ENCODE measurements at regions of chr7 and their contacts with region 1.

Region 1: DNA sequence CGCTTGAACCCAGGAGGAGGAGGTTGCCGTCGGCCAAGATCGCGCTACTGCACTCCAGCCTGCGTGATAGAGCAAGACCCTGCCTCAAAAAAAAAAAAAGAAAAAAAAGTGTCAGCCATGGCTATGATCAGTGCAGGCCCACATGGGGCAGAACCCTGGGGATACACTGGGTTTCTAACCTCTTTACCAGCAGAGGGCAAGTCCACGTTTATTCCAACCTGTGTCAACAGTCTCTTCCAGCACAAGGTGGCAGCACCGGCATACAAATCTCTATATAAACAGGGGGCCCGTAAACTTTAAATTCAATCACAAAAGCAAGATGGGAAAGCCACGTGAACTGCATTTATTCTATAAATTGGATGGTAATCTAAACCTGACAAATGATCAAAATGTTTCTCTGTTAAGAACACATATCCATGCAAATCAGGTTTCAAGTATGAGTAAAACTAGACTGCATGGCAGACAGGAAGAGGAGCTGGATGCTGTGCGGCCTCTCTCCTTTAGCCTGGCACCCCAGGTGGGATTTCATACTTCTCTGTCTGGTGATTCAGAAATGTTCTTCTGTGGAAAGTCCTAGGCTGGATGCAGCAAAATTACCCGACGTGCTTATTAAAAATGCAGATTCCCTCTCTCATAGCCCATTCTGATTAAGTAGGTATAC is 60.0 kb upstream of the STEAP1B start:
- DNase-seq: peak; percentile 79
- ATAC-seq: peak; percentile 73

Region 2: GRCh38 chr7:22584179-22584578 is 24.2 kb after region 1 on chr7:
- intact Hi-C with region 1: loop called (anchors 2 kb)
- DNase-seq: no peak
- ATAC-seq: no peak

Region 3: GRCh38 chr7:22601812-22602565 is 42.0 kb after region 1 on chr7:
- intact Hi-C with region 1: no loop called
- DNase-seq: no peak
- ATAC-seq: no peak

Region 4: DNA sequence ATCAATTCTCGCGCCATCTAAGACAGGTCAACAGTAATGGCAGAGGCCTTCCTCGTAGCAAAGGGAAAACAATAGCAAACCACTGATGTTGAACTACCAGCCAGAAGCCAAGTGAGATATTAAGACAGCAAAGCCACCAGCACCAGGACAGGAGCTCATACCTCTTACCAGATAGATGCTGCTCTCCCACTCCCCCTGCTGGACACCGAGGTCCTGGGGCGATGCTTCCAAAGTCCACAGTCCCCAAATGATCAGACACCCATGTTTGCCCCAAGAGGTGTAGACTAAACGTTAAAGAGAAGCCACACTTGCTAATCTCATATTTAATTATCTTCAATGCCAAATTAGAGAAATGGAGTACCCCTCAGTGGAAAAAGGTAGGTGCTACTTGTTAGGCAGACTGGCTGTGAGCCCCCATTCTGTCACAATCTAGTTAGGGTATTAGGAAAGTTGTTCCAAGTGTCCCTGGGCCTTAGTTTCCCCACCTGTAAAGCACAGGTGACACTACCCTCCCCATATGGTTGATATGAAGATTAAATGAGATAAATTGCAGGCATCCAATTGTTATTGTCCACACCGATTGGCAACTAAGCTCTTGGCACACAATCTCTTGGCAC is 222.8 kb after region 1 on chr7:
- intact Hi-C with region 1: loop called (anchors 1 kb)
- DNase-seq: no peak
- ATAC-seq: peak; percentile 32

Region 5: GRCh38 chr7:23055582-23056178 is 495.7 kb after region 1 on chr7:
- intact Hi-C with region 1: loop called (anchors 1 kb)
- DNase-seq: no peak
- ATAC-seq: peak; percentile 67